MCF 10A (cell line): ENCODE measurements at regions of chr2 and their contacts with region 1.

Region 1: GRCh38 chr2:142877216-142877756 is at the start of gene KYNU:
- DNase-seq: peak; percentile 87
- H3K4me3 Mint-ChIP-seq: peak within 1 kb of the TSS; percentile 93
- H3K27ac Mint-ChIP-seq: peak within 1 kb of the TSS; percentile 97
- H3K4me1 Mint-ChIP-seq: peaks cover 50% of the 10 kb centered on the region
- H3K27me3 Mint-ChIP-seq: no peaks in the 10 kb centered on the region
- CTCF ChIP-seq: peak; percentile 24
- total RNA-seq, gene KYNU: 143 and 160 TPM in 2 replicates

Region 2: DNA sequence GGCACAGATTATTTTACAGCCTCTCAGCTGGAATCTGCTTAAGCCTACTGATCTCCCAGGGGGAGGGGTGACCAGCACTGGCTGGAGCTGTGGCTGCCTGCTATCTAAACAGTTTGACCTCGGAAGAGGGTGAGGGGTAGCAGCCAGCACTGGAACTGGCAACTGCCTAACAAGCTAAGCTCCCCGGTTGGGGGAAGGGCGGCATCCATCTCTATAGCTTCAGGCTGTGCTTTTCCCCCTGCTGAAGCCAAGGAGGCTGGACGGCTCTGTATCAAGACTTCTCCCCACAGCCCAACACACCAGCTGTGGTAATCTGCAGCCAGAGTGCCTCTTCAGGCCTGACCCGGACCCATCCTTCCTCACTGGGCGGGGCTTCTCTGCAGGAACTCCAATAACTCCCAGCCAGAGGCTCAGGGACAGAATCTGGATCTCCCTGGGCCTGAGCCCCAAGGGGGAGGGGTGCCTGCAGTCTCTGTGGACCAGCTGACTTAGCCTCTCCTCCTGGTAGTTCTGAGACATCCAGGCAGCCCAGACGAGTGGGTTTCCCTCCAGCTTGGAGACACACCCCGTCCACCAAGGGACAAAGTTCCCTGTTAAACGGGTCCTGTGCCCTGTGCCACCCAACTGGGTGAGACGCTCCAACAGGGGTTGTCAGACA is 1306.7 kb before region 1 on chr2:
- CTCF ChIA-PET with region 1: no interaction called
- POLR2A ChIA-PET with region 1: no interaction called
- intact Hi-C with region 1: no loop called
- DNase-seq: no peak
- H3K4me3 Mint-ChIP-seq: no peak overlapping the region
- H3K27ac Mint-ChIP-seq: no peak overlapping the region
- H3K4me1 Mint-ChIP-seq: no peaks in the 10 kb centered on the region
- H3K27me3 Mint-ChIP-seq: peaks cover 33% of the 10 kb centered on the region
- CTCF ChIP-seq: no peak

Region 3: DNA sequence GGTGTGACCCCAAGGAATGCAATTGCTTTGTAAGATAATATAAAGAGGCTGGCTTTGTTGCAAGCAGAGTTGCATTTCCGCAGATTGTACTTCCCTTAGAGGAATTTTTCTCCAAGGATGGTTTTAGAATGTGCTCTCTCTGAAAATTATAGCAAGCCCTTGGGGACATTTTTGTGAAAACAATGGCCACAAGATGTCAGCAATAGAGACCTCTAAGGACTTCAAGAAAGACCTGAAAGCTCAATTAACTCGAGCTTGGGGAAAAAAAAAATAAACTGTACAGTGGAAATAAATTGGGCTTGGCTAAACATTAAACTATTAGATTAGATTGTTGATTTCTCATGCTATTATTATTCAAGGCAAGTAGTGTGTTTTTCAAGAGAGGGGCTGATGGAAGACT is 81.1 kb before region 1 on chr2:
- CTCF ChIA-PET with region 1: interaction called, 4 read pairs
- POLR2A ChIA-PET with region 1: interaction called, 5 read pairs
- intact Hi-C with region 1: loop called (anchors 1 kb)
- DNase-seq: peak; percentile 8
- H3K4me3 Mint-ChIP-seq: no peak overlapping the region
- H3K27ac Mint-ChIP-seq: peak overlapping the region; percentile 1
- H3K4me1 Mint-ChIP-seq: peaks cover 7% of the 10 kb centered on the region
- H3K27me3 Mint-ChIP-seq: no peaks in the 10 kb centered on the region
- CTCF ChIP-seq: no peak

Region 4: GRCh38 chr2:142857247-142858154 is 19.8 kb before region 1 on chr2:
- CTCF ChIA-PET with region 1: interaction called, 12 read pairs
- POLR2A ChIA-PET with region 1: interaction called, 12 read pairs
- intact Hi-C with region 1: no loop called
- DNase-seq: peak; percentile 79
- H3K4me3 Mint-ChIP-seq: peak overlapping the region; percentile 38
- H3K27ac Mint-ChIP-seq: peak overlapping the region; percentile 88
- H3K4me1 Mint-ChIP-seq: peaks cover 31% of the 10 kb centered on the region
- H3K27me3 Mint-ChIP-seq: no peaks in the 10 kb centered on the region
- CTCF ChIP-seq: no peak

Region 5: DNA sequence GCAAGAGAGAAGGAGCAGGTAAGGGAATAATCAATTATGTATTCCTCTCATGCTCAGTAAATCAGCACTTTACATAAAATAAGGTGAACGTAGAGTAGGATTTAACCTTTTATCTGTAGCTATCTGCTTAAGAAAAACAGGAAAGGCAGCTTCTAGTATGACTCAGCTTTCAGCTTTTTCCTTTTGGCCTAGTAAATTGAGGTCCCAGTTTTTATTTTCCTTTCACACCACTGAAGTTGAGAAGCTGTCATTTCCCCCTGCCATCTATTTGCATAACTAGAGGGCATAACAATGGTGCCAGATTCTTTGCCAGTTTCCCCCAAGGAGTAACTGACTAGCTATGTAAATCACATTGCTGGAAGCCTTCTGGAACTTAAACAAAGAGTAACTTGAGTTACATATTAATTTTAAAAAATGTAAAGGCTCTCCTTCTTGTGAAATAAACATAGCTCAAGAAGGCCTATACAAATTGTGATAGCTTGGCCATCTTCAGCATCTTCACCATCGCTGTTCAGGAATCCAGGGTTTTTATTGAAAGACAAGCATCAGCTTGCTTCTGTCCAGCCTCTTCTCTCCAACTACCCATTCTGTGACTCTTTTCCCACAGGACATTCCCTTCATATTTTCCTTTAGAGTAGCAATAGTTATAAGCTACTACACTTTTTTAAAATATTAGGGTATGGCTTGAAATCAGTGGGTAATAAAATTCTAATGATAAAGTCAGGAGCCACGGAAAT is 97.2 kb after region 1 on chr2:
- CTCF ChIA-PET with region 1: interaction called, 16 read pairs
- POLR2A ChIA-PET with region 1: interaction called, 13 read pairs
- intact Hi-C with region 1: no loop called
- DNase-seq: peak; percentile 35
- H3K4me3 Mint-ChIP-seq: no peak overlapping the region
- H3K27ac Mint-ChIP-seq: peak overlapping the region; percentile 81
- H3K4me1 Mint-ChIP-seq: peaks cover 24% of the 10 kb centered on the region
- H3K27me3 Mint-ChIP-seq: no peaks in the 10 kb centered on the region
- CTCF ChIP-seq: no peak

Region 6: GRCh38 chr2:142980561-142981378 is 103.5 kb after region 1 on chr2:
- CTCF ChIA-PET with region 1: interaction called, 16 read pairs
- POLR2A ChIA-PET with region 1: interaction called, 13 read pairs
- intact Hi-C with region 1: loop called (anchors 2 kb)
- DNase-seq: peak; percentile 38
- H3K4me3 Mint-ChIP-seq: no peak overlapping the region
- H3K27ac Mint-ChIP-seq: no peak overlapping the region
- H3K4me1 Mint-ChIP-seq: peaks cover 6% of the 10 kb centered on the region
- H3K27me3 Mint-ChIP-seq: no peaks in the 10 kb centered on the region
- CTCF ChIP-seq: peak; percentile 44

Region 7: DNA sequence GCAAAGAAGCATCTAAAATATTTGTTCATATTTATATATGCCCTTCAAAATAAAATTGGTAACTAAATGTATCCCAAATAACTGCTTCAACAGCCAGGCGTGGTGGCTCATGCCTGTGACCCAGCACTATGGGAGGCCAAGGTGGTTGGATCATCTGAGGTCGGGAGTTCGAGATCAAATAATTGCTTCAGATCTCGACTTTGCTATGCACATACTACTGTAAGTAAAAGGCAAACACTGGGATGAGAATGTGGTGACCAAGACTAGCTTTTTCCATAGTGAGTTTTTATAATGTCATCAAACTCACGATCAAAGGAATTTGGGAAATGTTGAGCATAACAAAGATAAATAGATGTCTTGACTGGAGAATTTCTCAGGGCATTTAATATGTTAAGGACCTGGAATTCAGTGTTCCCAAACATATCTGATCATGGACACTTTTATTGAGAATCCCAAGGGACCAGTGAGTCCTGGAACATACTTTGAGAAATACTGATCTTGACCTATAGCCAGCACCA is 457.5 kb after region 1 on chr2:
- CTCF ChIA-PET with region 1: no interaction called
- POLR2A ChIA-PET with region 1: no interaction called
- intact Hi-C with region 1: no loop called
- DNase-seq: no peak
- H3K4me3 Mint-ChIP-seq: no peak overlapping the region
- H3K27ac Mint-ChIP-seq: no peak overlapping the region
- H3K4me1 Mint-ChIP-seq: no peaks in the 10 kb centered on the region
- H3K27me3 Mint-ChIP-seq: no peaks in the 10 kb centered on the region
- CTCF ChIP-seq: no peak